ENCODE measurements at regions of chr12 and their contacts with region 1.

Region 1: DNA sequence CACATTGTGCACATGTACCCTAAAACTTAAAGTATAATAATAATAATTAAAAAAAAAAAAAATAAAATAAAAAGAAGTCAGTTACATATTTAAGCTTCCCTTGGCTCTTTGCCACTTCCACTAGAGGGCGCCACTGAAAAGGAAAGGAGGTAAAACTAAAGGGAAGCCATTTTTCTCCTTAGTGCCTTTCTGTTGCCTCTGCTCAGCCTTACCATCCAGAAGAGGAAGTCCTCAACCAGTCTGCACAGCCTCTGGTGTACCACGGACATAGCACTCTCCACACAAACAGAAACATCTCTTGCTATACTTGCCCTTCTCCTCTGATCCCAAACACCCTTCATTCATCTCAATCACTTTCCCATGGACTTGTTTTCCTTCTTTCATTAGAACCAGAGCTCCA is 169.0 kb upstream of the EEA1 start:
- DNase-seq: peak; percentile 56
- H3K4me3 Mint-ChIP-seq: no peak overlapping the region
- H3K27ac Mint-ChIP-seq: no peak overlapping the region
- H3K4me1 Mint-ChIP-seq: peaks cover 6% of the 10 kb centered on the region
- H3K27me3 Mint-ChIP-seq: no peaks in the 10 kb centered on the region

Region 2: DNA sequence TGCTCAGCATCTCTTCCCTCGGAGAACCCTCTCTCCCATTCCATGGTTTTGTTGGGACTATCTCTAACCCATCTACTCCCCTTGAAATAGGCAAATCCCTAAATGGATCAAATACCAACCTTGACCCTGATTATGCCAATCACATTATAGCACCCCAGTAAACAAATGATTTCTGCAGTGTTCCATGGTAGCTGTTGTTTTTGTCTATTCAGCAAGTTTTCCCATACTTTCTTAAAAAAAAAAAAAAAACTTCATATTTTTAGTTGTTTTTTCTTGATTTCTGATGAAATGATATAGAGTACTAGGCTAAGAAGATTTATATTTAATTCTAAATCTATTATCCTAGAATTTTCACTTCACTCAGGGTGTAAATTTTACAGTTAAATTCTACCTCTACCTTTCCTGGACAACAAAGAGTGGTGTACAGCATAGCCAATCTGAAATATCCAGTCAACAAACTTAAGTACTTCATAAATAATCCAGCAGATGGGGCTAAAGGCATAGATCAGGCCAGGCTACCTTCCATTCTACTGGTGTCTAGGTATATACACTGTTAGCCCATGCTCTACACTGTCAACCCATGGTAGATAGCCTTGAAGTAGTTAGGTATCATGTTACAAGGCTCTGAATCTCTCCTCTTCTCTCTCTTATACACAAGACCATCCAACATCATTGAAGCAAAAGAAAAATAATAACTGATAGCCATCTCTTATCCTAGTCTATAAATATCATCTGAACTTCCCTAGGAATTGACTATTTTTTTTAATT is 313.1 kb before region 1 on chr12:
- intact Hi-C with region 1: loop called (anchors 5 kb)
- DNase-seq: peak; percentile 5
- H3K4me3 Mint-ChIP-seq: no peak overlapping the region
- H3K27ac Mint-ChIP-seq: no peak overlapping the region
- H3K4me1 Mint-ChIP-seq: peaks cover 4% of the 10 kb centered on the region
- H3K27me3 Mint-ChIP-seq: no peaks in the 10 kb centered on the region

Region 3: GRCh38 chr12:93167841-93168492 is 69.9 kb after region 1 on chr12:
- intact Hi-C with region 1: loop called (anchors 5 kb)
- DNase-seq: peak; percentile 6
- H3K4me3 Mint-ChIP-seq: peak overlapping the region; percentile 37
- H3K27ac Mint-ChIP-seq: peak overlapping the region; percentile 18
- H3K4me1 Mint-ChIP-seq: peaks cover 18% of the 10 kb centered on the region
- H3K27me3 Mint-ChIP-seq: peaks cover 2% of the 10 kb centered on the region

Region 4: DNA sequence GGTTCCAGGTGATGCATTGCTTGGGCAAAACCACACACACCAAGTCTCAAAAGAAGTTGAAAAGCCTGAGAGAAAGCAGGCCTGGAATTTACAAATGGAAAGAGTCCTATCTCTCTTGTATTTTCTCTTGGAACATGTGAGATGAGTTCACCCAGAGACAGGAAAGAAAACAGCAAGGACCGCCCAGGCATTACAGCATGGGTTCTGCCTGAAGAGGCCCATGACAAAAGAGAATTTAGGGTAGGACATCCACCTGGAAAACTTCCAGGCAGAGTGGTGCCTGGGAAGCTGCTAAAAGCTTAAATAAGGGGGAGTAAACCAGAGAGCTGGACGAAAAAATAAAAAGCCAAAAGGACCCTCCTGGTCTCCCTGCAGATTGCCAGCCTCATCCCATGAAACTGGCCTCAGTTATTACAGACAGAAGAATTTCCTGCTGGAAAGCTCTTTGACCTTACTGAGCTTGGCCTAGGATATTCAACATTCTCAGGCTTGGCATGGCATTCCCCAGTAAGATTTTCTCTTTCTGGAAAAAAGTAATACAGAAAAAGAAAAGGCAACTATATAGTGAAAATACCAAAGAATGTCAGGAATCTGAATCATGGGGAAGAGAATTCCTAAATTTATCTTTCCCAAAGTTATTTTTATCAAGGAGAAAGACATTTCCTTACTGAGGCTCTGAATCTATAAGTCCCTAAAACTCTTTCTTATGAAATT is 158.3 kb after region 1 on chr12:
- intact Hi-C with region 1: no loop called
- DNase-seq: no peak
- H3K4me3 Mint-ChIP-seq: no peak overlapping the region
- H3K27ac Mint-ChIP-seq: no peak overlapping the region
- H3K4me1 Mint-ChIP-seq: no peaks in the 10 kb centered on the region
- H3K27me3 Mint-ChIP-seq: no peaks in the 10 kb centered on the region

Measured in activated T-helper 1 cell treated with anti-CD3 and anti-CD28 coated beads, Interleukin-12 subunit alpha, Interleukin-12 subunit beta, Interleukin-2, Interleukin-4 antibody, amounts not matched to agents 30 ng/mL and 10 ng/mL and 1 ng/mL, durations not matched to agents 14 hours and 24 hours and 36 hours (primary cell).